ENCODE measurements at regions of chr5 and their contacts with region 1.

Region 1: GRCh38 chr5:108260117-108260857 is 121.6 kb downstream of the FBXL17 start:
- DNase-seq: peak; percentile 80 to 89 (median 83)
- H3K4me3 ChIP-seq: peak overlapping the region in 6 of 7 experiments; percentile 20 to 82 (median 57)
- H3K27ac ChIP-seq: peak overlapping the region in 1 of 2 experiments; percentile 41
- H3K4me1 ChIP-seq: peaks cover 0 to 4% (median 1%) of the 10 kb centered on the region in 4 experiments
- H3K27me3 ChIP-seq: no peaks in the 10 kb centered on the region

Region 2: DNA sequence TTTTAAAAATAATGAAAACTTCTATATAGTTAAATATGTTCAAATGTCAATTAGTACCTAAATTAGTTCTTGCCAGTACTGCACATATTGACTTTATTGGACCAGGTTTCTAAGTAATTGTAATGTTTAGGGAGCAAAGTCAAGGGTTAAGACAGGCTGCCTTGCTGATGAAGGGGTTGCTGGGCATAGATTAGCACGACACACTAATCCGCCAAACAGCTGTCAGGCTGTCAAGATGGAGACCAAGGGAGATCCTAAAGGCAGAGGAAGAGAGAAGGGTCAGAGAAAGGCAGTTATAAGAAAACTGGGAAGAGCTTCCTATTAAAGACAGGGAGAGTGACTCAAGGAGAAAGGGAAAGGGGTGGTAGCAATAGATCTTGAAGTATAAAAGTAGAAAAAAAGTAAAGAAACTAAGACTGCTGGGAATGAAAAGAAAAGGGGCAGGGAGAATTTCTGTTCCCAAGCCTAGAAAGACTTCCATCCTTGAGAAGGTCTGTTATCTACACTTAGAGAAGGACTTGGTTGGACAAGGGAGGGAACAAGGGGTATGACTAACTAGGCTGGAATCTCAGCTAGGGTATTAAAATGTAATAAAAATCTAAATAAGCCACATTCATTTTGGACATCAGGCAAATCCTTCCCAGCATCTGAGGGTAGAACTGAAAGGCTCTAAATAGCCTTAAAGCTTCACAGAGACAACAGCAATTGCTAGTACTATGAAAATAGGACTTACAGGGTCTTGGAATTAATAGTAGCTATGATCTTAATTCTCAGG is 67.1 kb before region 1 on chr5:
- CTCF ChIA-PET with region 1: no interaction called
- POLR2A ChIA-PET with region 1: no interaction called
- DNase-seq: no peak
- H3K4me3 ChIP-seq: no peak overlapping the region
- H3K27ac ChIP-seq: no peak overlapping the region
- H3K4me1 ChIP-seq: no peaks in the 10 kb centered on the region
- H3K27me3 ChIP-seq: no peaks in the 10 kb centered on the region

Region 3: GRCh38 chr5:108271127-108271526 is 10.8 kb after region 1 on chr5:
- CTCF ChIA-PET with region 1: interaction called, 16 read pairs
- POLR2A ChIA-PET with region 1: no interaction called
- DNase-seq: peak; percentile 39 to 77 (median 59)
- H3K4me3 ChIP-seq: no peak overlapping the region
- H3K27ac ChIP-seq: no peak overlapping the region
- H3K4me1 ChIP-seq: no peaks in the 10 kb centered on the region
- H3K27me3 ChIP-seq: no peaks in the 10 kb centered on the region

Region 4: DNA sequence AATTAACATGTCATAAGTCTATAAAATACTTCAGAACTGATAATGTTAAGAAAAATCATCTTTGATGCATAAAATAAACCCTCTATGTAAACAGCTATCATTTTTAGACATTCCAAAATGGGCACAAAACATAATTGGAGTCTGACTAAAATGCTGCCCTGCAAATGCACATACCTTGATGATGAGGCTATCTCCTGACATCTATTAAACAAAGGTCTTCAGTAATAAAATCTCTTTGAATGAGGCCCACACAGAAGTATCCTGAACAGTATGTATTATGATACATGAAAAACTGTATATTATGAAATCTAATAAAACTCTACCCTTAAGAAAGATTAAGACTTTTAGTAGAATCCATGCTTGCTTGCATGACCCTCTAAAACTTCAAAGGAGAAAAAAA is 55.5 kb after region 1 on chr5:
- CTCF ChIA-PET with region 1: no interaction called
- POLR2A ChIA-PET with region 1: no interaction called
- DNase-seq: no peak
- H3K4me3 ChIP-seq: no peak overlapping the region
- H3K27ac ChIP-seq: no peak overlapping the region
- H3K4me1 ChIP-seq: no peaks in the 10 kb centered on the region
- H3K27me3 ChIP-seq: no peaks in the 10 kb centered on the region

Region 5: GRCh38 chr5:108345541-108346171 is 85.4 kb after region 1 on chr5:
- CTCF ChIA-PET with region 1: interaction called, 60 read pairs
- POLR2A ChIA-PET with region 1: no interaction called
- DNase-seq: peak; percentile 60 to 78 (median 77)
- H3K4me3 ChIP-seq: no peak overlapping the region
- H3K27ac ChIP-seq: no peak overlapping the region
- H3K4me1 ChIP-seq: no peaks in the 10 kb centered on the region
- H3K27me3 ChIP-seq: no peaks in the 10 kb centered on the region

Measured in common myeloid progenitor, CD34-positive (primary cell).